Activated T-helper 1 cell treated with anti-CD3 and anti-CD28 coated beads, Interleukin-12 subunit alpha, Interleukin-12 subunit beta, Interleukin-2, Interleukin-4 antibody, amounts not matched to agents 30 ng/mL and 10 ng/mL and 1 ng/mL, durations not matched to agents 14 hours and 24 hours and 36 hours (primary cell): ENCODE measurements at regions of chr11 and their contacts with region 1.

Region 1: GRCh38 chr11:118565051-118565450 is 680 bp downstream of the IFT46 start:
- DNase-seq: no peak
- H3K4me3 Mint-ChIP-seq: peak overlapping the region; percentile 81
- H3K27ac Mint-ChIP-seq: peak overlapping the region; percentile 29
- H3K4me1 Mint-ChIP-seq: peaks cover 7% of the 10 kb centered on the region
- H3K27me3 Mint-ChIP-seq: peaks cover 2% of the 10 kb centered on the region

Region 2: DNA sequence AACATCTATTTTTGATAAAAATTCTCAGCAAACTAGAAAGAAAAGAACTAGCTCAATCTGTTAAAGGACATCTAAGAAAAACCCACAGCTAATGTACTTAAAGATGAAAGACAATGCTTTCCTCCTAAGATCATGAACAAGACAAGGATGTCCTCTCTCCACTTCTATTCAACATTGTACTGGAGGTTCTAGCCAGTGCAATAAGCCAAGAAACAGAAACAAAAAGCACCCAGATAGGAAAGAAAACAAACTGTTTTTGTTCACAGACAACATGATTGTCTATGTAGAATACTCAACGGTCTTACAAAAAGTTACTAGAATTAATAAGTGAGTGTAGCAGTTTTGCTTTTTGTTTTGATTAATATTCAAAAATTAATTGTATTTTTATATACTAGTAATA is 230.3 kb before region 1 on chr11:
- intact Hi-C with region 1: no loop called
- DNase-seq: no peak
- H3K4me3 Mint-ChIP-seq: peak overlapping the region; percentile 65
- H3K27ac Mint-ChIP-seq: peak overlapping the region; percentile 66
- H3K4me1 Mint-ChIP-seq: peaks cover 40% of the 10 kb centered on the region
- H3K27me3 Mint-ChIP-seq: no peaks in the 10 kb centered on the region

Region 3: GRCh38 chr11:118401151-118401878 is 163.7 kb before region 1 on chr11 and contains the start of gene ATP5MG:
- intact Hi-C with region 1: loop called (anchors 1 kb)
- DNase-seq: peak; percentile 87
- H3K4me3 Mint-ChIP-seq: peak within 1 kb of the TSS; percentile 93
- H3K27ac Mint-ChIP-seq: peak within 1 kb of the TSS; percentile 96
- H3K4me1 Mint-ChIP-seq: peaks cover 68% of the 10 kb centered on the region
- H3K27me3 Mint-ChIP-seq: no peaks in the 10 kb centered on the region
- total RNA-seq, gene ATP5MG: 205 and 216 TPM in 2 replicates

Region 4: GRCh38 chr11:118514103-118514502 is 50.9 kb before region 1 on chr11:
- intact Hi-C with region 1: loop called (anchors 10 kb)
- DNase-seq: no peak
- H3K4me3 Mint-ChIP-seq: no peak overlapping the region
- H3K27ac Mint-ChIP-seq: peak overlapping the region; percentile 52
- H3K4me1 Mint-ChIP-seq: peaks cover 6% of the 10 kb centered on the region
- H3K27me3 Mint-ChIP-seq: no peaks in the 10 kb centered on the region

Region 5: GRCh38 chr11:118530408-118531339 is 34.4 kb before region 1 on chr11 and contains the start of gene TMEM25:
- intact Hi-C with region 1: loop called (anchors 1 kb)
- DNase-seq: peak; percentile 71
- H3K4me3 Mint-ChIP-seq: peak within 1 kb of the TSS; percentile 89
- H3K27ac Mint-ChIP-seq: peak within 1 kb of the TSS; percentile 88
- H3K4me1 Mint-ChIP-seq: peaks cover 21% of the 10 kb centered on the region
- H3K27me3 Mint-ChIP-seq: no peaks in the 10 kb centered on the region
- total RNA-seq, gene TMEM25: 13.6 and 15.0 TPM in 2 replicates

Region 6: GRCh38 chr11:118997627-118998387 is 432.8 kb after region 1 on chr11 and contains the start of gene CENATAC:
- intact Hi-C with region 1: loop called (anchors 1 kb)
- DNase-seq: peak; percentile 96
- H3K4me3 Mint-ChIP-seq: peak within 1 kb of the TSS; percentile 96
- H3K27ac Mint-ChIP-seq: peak within 1 kb of the TSS; percentile 97
- H3K4me1 Mint-ChIP-seq: peaks cover 27% of the 10 kb centered on the region
- H3K27me3 Mint-ChIP-seq: no peaks in the 10 kb centered on the region
- total RNA-seq, gene CENATAC: 50.1 and 53.6 TPM in 2 replicates